CD8-positive, alpha-beta memory T cell (primary cell): ENCODE measurements at regions of chr19 and their contacts with region 1.

Region 1: DNA sequence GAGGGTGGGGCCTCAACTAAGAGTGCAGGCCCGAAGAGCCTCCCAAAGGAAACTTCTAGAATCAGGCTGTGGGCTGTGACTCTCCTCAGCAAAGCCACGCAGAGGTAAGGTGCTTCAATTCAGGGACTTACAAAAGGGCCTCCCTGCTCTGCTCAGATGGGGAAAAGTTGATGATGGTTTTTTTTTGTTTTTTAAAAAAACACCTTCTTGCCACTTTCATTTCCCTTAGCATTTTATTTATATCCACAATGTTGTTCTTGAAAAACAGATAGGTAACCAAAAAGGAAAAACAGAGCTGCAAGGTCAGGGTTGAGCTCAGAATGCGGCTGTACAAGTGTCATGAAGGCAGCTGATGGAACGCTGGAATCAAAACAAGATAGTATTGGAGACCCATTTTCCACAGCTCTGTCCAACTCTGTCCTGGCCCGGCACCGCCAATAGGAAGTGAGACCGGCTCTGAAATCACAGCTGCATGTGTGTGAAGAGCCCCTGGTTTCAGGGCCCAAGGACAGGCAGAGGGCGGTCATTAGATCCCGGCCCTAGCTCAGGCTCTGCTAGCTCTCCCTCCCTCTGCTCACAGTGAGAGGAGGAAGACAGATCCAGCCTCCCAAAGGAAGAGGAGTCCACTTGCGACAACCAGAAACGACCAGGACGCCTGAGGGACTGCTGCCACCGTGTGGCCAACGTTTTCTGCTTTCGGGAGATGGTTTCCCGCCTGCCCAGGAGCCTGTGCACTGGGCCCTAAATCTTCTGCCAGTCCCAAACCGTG is 58.3 kb downstream of the KLF2 start:
- DNase-seq: peak; percentile 66 to 83 (median 70)
- H3K4me3 ChIP-seq: peak overlapping the region; percentile 45
- H3K4me3 Mint-ChIP-seq: peak overlapping the region; percentile 54 to 87 (median 72)
- H3K27ac ChIP-seq: peak overlapping the region; percentile 40
- H3K27ac Mint-ChIP-seq: peak overlapping the region; percentile 91 to 97 (median 95)
- H3K4me1 ChIP-seq: peaks cover 68% of the 10 kb centered on the region
- H3K4me1 Mint-ChIP-seq: peaks cover 55 to 79% (median 55%) of the 10 kb centered on the region in 3 donors
- H3K27me3 ChIP-seq: no peaks in the 10 kb centered on the region
- H3K27me3 Mint-ChIP-seq: no peaks in the 10 kb centered on the region

Region 2: GRCh38 chr19:16247353-16248182 is 135.4 kb before region 1 on chr19:
- CTCF ChIA-PET with region 1: interaction called, 126 read pairs
- POLR2A ChIA-PET with region 1: interaction called, 16 read pairs
- DNase-seq: peak; percentile 63 to 86 (median 78)
- H3K4me3 ChIP-seq: no peak overlapping the region
- H3K4me3 Mint-ChIP-seq: peak overlapping the region in 5 of 7 donors; percentile 11 to 70 (median 41)
- H3K27ac ChIP-seq: no peak overlapping the region
- H3K27ac Mint-ChIP-seq: peak overlapping the region in 5 of 8 donors; percentile 43 to 89 (median 87)
- H3K4me1 ChIP-seq: peaks cover 28% of the 10 kb centered on the region
- H3K4me1 Mint-ChIP-seq: peaks cover 16 to 23% (median 17%) of the 10 kb centered on the region in 3 donors
- H3K27me3 ChIP-seq: no peaks in the 10 kb centered on the region
- H3K27me3 Mint-ChIP-seq: peaks cover 3 to 5% of the 10 kb centered on the region in 2 donors

Region 3: DNA sequence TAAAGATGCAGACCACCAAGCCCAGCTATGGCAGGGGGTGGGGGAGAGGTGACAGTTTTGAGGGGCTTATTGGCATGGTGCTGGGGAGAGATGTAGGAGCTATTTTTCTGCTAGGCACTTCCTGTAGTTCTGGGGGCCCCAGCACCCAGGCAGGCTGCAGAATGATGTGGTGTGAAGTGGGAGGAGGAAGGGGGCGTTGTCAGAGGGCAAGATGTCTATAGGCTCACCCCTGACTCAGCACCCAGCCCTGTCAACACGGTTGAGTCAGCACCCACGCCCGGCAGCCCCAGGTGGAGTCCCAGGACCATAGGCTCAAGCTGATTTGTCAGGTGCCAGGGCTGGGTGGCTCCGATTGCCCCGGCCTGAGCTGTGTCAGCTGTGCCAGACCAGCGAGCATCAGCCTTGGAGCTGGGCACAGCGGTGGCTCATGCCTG is 52.6 kb before region 1 on chr19:
- CTCF ChIA-PET with region 1: interaction called, 130 read pairs
- POLR2A ChIA-PET with region 1: interaction called, 219 read pairs
- DNase-seq: peak; percentile 92 to 98 (median 92)
- H3K4me3 ChIP-seq: peak overlapping the region; percentile 29
- H3K4me3 Mint-ChIP-seq: peak overlapping the region; percentile 90 to 100 (median 100)
- H3K27ac ChIP-seq: peak overlapping the region; percentile 100
- H3K27ac Mint-ChIP-seq: peak overlapping the region; percentile 90 to 99 (median 98)
- H3K4me1 ChIP-seq: peaks cover 39% of the 10 kb centered on the region
- H3K4me1 Mint-ChIP-seq: peaks cover 49 to 62% (median 52%) of the 10 kb centered on the region in 3 donors
- H3K27me3 ChIP-seq: no peaks in the 10 kb centered on the region
- H3K27me3 Mint-ChIP-seq: peaks cover 0 to 36% of the 10 kb centered on the region in 2 donors

Region 4: GRCh38 chr19:16338470-16339360 is 44.2 kb before region 1 on chr19:
- CTCF ChIA-PET with region 1: interaction called, 30 read pairs
- POLR2A ChIA-PET with region 1: interaction called, 13 read pairs
- DNase-seq: peak; percentile 36 to 67 (median 48)
- H3K4me3 ChIP-seq: peak overlapping the region; percentile 59
- H3K4me3 Mint-ChIP-seq: peak overlapping the region; percentile 76 to 94 (median 88)
- H3K27ac ChIP-seq: peak overlapping the region; percentile 50
- H3K27ac Mint-ChIP-seq: peak overlapping the region; percentile 82 to 99 (median 96)
- H3K4me1 ChIP-seq: peaks cover 73% of the 10 kb centered on the region
- H3K4me1 Mint-ChIP-seq: peaks cover 63 to 70% (median 69%) of the 10 kb centered on the region in 3 donors
- H3K27me3 ChIP-seq: no peaks in the 10 kb centered on the region
- H3K27me3 Mint-ChIP-seq: no peaks in the 10 kb centered on the region

Region 5: DNA sequence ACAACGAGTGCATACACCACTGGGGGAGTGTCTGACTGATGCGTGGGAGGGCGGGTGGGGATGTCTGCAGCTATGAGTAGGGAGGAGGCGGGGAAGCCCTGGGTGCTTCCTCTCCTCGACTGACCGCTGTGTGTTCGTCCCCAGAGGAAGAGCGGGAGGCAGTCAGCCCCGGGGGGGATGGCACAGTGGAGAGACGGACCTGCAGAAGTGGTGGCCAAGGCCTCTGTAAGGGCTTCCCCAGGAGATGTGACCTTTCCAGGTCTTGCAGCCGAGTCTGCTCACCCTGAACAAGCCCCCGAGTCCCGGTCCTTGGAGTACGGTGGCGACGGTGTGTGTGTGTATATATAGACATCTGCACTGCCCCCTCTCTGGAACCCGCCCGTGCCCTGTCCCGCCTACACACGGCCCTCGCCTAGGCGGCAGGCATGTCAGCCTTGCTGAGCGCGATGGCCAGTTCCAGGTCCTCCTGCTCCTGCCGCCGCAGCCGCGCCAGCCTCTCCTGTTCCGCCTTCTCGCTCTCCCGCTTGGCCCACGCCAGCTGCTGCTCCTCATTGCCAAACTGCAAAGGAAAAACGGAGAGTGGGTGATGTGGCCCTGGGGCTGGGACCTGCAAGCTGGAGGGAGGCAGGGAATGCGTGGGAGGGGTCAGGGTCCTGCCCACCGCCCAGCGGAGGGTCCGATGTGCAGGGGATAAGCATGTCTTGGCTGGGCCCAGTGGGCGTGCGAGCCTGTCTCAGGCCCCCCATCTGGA is 27.5 kb before region 1 on chr19:
- CTCF ChIA-PET with region 1: interaction called, 11 read pairs
- POLR2A ChIA-PET with region 1: interaction called, 6 read pairs
- DNase-seq: no peak
- H3K4me3 ChIP-seq: no peak overlapping the region
- H3K4me3 Mint-ChIP-seq: peak overlapping the region in 5 of 7 donors; percentile 16 to 75 (median 50)
- H3K27ac ChIP-seq: no peak overlapping the region
- H3K27ac Mint-ChIP-seq: peak overlapping the region in 4 of 8 donors; percentile 19 to 69 (median 33)
- H3K4me1 ChIP-seq: peaks cover 75% of the 10 kb centered on the region
- H3K4me1 Mint-ChIP-seq: peaks cover 52 to 75% (median 65%) of the 10 kb centered on the region in 3 donors
- H3K27me3 ChIP-seq: no peaks in the 10 kb centered on the region
- H3K27me3 Mint-ChIP-seq: no peaks in the 10 kb centered on the region

Region 6: GRCh38 chr19:16371540-16371986 is 11.4 kb before region 1 on chr19:
- CTCF ChIA-PET with region 1: interaction called, 108 read pairs
- POLR2A ChIA-PET with region 1: interaction called, 195 read pairs
- DNase-seq: peak; percentile 86 to 97 (median 96)
- H3K4me3 ChIP-seq: peak overlapping the region; percentile 46
- H3K4me3 Mint-ChIP-seq: no peak overlapping the region
- H3K27ac ChIP-seq: peak overlapping the region; percentile 84
- H3K27ac Mint-ChIP-seq: no peak overlapping the region
- H3K4me1 ChIP-seq: peaks cover 96% of the 10 kb centered on the region
- H3K4me1 Mint-ChIP-seq: peaks cover 0 to 43% (median 33%) of the 10 kb centered on the region in 3 donors
- H3K27me3 ChIP-seq: no peaks in the 10 kb centered on the region
- H3K27me3 Mint-ChIP-seq: peaks cover 0 to 7% of the 10 kb centered on the region in 2 donors